MCF 10A (cell line): ENCODE measurements at regions of chr2 and their contacts with region 1.

Region 1: DNA sequence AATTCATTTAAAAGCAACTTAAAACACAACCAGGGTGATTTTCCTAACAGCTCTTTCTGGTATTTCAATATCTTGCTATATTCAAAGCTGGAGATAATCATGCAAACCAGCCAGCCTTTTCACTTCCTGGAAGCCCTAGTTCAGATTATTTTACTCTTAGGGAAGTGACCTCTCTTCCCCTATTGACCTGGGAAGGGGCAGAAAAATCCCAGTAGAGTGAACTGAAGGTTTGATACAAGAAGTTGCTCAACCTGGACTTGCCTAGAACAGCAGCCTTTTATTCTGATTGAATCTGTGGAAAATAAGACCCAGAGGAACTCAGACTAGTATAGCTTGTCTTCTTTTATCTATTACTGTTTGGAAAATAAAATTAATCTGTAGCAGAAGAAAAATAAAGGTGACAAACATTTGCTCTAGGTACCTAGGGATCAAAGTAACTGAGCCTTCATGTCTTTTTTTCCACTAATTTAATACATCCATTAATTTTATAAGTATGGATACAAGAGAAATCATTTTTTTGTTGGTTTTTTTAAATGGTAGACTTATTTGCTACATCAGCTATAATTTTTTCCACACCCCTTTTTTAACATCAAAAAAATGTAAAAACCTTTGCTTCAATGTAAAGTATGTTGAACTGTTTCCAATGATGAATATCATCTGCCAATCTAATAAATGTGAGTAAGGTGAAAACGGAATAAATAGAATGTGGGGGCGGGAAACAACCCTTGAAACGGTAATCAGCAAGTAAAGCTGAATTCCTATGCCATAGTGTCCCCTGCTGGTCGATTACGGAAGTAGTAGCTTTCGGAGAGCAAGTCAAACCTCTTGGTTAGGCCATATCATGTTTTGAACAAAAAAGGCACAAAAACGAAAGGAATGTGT is 629.9 kb downstream of the NRXN1 start:
- DNase-seq: peak; percentile 63
- H3K4me3 Mint-ChIP-seq: no peak overlapping the region
- H3K27ac Mint-ChIP-seq: no peak overlapping the region
- H3K4me1 Mint-ChIP-seq: no peaks in the 10 kb centered on the region
- H3K27me3 Mint-ChIP-seq: peaks cover 31% of the 10 kb centered on the region
- CTCF ChIP-seq: peak; percentile 89

Region 2: DNA sequence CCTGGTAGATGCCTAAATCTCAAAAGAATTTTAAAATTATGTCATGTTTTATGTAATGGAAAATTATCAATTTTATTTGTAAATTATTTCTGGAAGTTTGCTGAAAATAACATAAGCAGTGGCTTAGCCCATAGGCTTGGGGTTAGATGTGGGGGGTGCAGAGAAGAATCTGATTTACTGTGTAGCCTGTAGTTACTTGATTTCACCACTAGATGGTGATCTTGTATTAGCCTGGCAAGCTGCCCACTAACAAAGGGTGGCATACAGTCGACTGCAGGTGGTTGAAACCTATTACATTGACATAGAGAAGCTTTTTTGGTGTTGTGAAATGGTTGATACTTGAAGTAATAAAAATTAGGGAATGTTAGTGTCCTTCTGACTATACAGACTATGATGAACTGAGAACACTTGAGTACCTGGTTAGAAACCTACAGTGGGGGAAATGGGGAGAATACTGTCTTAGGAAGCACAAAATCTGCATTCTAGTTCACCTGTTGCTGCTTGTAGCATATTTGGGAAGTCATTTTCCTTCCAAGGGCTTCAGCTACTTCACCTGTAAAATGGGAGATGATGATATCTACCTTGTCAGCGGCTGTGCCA is 1455.5 kb before region 1 on chr2:
- CTCF ChIA-PET with region 1: interaction called, 19 read pairs
- POLR2A ChIA-PET with region 1: no interaction called
- intact Hi-C with region 1: loop called (anchors 2 kb)
- DNase-seq: peak; percentile 74
- H3K4me3 Mint-ChIP-seq: no peak overlapping the region
- H3K27ac Mint-ChIP-seq: no peak overlapping the region
- H3K4me1 Mint-ChIP-seq: no peaks in the 10 kb centered on the region
- H3K27me3 Mint-ChIP-seq: no peaks in the 10 kb centered on the region
- CTCF ChIP-seq: peak; percentile 82

Region 3: GRCh38 chr2:49616800-49617199 is 785.2 kb before region 1 on chr2:
- CTCF ChIA-PET with region 1: interaction called, 5 read pairs
- POLR2A ChIA-PET with region 1: no interaction called
- intact Hi-C with region 1: loop called (anchors 1 kb)
- DNase-seq: peak; percentile 56
- H3K4me3 Mint-ChIP-seq: no peak overlapping the region
- H3K27ac Mint-ChIP-seq: no peak overlapping the region
- H3K4me1 Mint-ChIP-seq: no peaks in the 10 kb centered on the region
- H3K27me3 Mint-ChIP-seq: peaks cover 13% of the 10 kb centered on the region
- CTCF ChIP-seq: peak; percentile 49

Region 4: DNA sequence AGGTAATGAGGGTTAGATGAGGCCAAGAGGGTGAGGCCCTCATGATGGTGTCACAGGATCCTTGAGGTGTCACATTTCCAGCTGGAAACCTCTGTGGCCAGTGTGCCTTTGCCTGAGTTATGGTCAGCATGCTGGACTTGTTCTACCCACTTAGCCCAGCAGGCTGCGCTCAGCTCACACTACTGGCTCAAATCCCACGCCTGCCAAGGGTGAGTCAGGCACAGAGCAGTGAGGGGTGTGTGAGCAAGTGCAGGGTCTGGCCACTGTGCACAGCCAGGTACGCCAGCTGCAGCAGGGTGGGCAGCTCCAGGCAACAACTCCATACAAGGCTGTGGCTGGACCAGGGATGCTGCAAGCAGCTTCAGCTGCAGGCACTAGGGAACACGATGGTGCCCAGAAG is 631.1 kb before region 1 on chr2:
- CTCF ChIA-PET with region 1: interaction called, 18 read pairs
- POLR2A ChIA-PET with region 1: interaction called, 3 read pairs
- intact Hi-C with region 1: loop called (anchors 1 kb)
- DNase-seq: peak; percentile 65
- H3K4me3 Mint-ChIP-seq: no peak overlapping the region
- H3K27ac Mint-ChIP-seq: no peak overlapping the region
- H3K4me1 Mint-ChIP-seq: no peaks in the 10 kb centered on the region
- H3K27me3 Mint-ChIP-seq: peaks cover 20% of the 10 kb centered on the region
- CTCF ChIP-seq: peak; percentile 55

Region 5: DNA sequence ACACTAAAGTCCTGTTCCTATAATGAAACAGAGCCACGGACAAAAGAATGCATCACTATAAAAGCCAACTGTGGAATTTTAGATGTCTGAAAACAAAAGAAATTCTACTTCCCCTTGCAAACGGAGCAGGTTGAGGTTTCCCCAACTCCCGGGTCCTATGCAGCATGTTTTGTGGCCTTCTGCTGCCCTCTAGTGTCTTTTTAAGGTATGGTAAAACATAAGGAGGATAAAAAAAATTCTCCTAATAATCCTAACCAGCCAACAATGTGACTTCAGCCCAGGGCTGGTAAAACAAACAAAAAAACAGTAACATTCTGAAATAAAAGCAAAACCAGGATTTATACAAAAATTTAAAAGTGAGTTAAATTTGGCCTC is 90.5 kb after region 1 on chr2:
- CTCF ChIA-PET with region 1: interaction called, 14 read pairs
- POLR2A ChIA-PET with region 1: no interaction called
- intact Hi-C with region 1: loop called (anchors 5 kb)
- DNase-seq: peak; percentile 70
- H3K4me3 Mint-ChIP-seq: peak overlapping the region; percentile 41
- H3K27ac Mint-ChIP-seq: no peak overlapping the region
- H3K4me1 Mint-ChIP-seq: peaks cover 6% of the 10 kb centered on the region
- H3K27me3 Mint-ChIP-seq: peaks cover 38% of the 10 kb centered on the region
- CTCF ChIP-seq: peak; percentile 65